ENCODE measurements at regions of chr12 and their contacts with region 1.

Region 1: GRCh38 chr12:112992541-112993398 is 14.5 kb downstream of the OAS2 start:
- DNase-seq: peak; percentile 84
- H3K4me3 Mint-ChIP-seq: no peak overlapping the region
- H3K27ac Mint-ChIP-seq: no peak overlapping the region
- H3K4me1 Mint-ChIP-seq: peaks cover 31% of the 10 kb centered on the region
- H3K27me3 Mint-ChIP-seq: no peaks in the 10 kb centered on the region

Region 2: DNA sequence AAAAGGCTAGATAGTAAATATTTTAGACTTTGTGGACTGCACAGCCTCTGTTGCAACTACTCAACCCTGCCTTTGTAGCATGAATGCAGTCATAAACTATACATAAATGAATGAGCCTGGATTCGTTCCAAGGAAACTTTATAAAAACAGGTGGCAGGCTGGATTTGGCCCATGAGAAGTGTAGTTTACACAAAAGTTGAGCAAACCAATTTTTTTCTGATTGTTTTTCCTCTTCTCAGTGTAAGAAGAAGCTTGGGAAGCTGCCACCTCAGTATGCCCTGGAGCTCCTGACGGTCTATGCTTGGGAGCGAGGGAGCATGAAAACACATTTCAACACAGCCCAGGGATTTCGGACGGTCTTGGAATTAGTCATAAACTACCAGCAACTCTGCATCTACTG is 76.5 kb before region 1 on chr12:
- CTCF ChIA-PET with region 1: interaction called, 3 read pairs
- POLR2A ChIA-PET with region 1: no interaction called
- intact Hi-C with region 1: loop called (anchors 2 kb)
- DNase-seq: no peak
- H3K4me3 Mint-ChIP-seq: no peak overlapping the region
- H3K27ac Mint-ChIP-seq: no peak overlapping the region
- H3K4me1 Mint-ChIP-seq: no peaks in the 10 kb centered on the region
- H3K27me3 Mint-ChIP-seq: no peaks in the 10 kb centered on the region

Region 3: GRCh38 chr12:113022563-113023297 is 30.0 kb after region 1 on chr12:
- CTCF ChIA-PET with region 1: interaction called, 27 read pairs
- POLR2A ChIA-PET with region 1: no interaction called
- intact Hi-C with region 1: no loop called
- DNase-seq: no peak
- H3K4me3 Mint-ChIP-seq: no peak overlapping the region
- H3K27ac Mint-ChIP-seq: peak overlapping the region; percentile 4
- H3K4me1 Mint-ChIP-seq: peaks cover 8% of the 10 kb centered on the region
- H3K27me3 Mint-ChIP-seq: no peaks in the 10 kb centered on the region

Region 4: DNA sequence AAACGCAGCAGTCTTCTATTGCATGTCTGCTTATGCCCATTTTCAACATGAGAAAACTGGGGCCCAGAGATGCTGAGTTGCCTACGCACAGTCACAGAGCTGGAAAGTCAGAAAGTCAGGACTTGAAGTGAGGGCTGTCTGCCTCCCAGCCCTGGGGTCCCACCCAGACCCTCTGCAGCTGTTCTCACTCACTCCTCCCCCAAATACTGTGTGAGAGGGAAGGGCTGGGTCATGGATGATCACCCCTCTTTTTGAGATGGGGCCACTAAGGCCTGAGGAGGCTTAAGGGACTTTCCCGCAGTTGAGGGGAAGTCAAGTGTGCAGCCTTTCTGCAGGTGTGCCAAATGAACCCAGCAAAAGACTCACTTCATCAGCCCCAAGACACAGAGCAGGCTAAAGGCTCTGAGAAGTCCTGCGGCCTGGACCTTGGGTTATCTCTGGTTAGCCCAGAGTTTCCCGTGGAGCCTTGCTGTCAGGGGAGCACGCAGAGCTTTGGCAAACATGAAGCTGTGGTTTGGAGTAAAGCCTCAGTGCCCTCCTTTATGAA is 82.4 kb after region 1 on chr12:
- CTCF ChIA-PET with region 1: interaction called, 14 read pairs
- POLR2A ChIA-PET with region 1: no interaction called
- intact Hi-C with region 1: no loop called
- DNase-seq: peak; percentile 33
- H3K4me3 Mint-ChIP-seq: no peak overlapping the region
- H3K27ac Mint-ChIP-seq: peak overlapping the region; percentile 54
- H3K4me1 Mint-ChIP-seq: peaks cover 44% of the 10 kb centered on the region
- H3K27me3 Mint-ChIP-seq: no peaks in the 10 kb centered on the region

Region 5: GRCh38 chr12:113152835-113153814 is 160.4 kb after region 1 on chr12:
- CTCF ChIA-PET with region 1: interaction called, 57 read pairs
- POLR2A ChIA-PET with region 1: no interaction called
- intact Hi-C with region 1: loop called (anchors 10 kb)
- DNase-seq: peak; percentile 76
- H3K4me3 Mint-ChIP-seq: peak overlapping the region; percentile 73
- H3K27ac Mint-ChIP-seq: no peak overlapping the region
- H3K4me1 Mint-ChIP-seq: peaks cover 23% of the 10 kb centered on the region
- H3K27me3 Mint-ChIP-seq: peaks cover 8% of the 10 kb centered on the region

Measured in activated CD4-positive, alpha-beta memory T cell treated with anti-CD3 and anti-CD28 coated beads for 36 hours (primary cell).